ENCODE measurements at regions of chr5 and their contacts with region 1.

Region 1: DNA sequence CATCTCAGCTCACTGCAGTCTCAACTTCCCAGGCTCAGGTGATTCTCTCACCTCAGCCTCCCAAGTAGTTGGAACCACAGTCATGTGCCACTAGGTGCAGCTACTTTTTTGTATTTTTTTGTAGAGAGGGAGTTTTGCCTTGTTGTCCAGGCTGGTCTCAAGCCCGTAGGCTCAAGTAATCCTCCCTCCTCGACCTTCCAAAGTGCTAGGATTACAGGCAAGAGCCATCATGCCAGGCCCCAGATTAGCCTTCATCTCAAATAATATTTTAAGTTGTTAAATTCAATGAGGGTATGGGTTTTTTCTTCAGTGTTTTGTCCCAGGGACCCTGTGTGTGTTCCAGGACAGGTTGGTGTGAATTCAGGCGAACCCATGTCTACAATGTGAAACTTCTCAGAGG is 12.5 kb upstream of the RFESD start:
- DNase-seq: no peak
- H3K4me3 ChIP-seq: no peak overlapping the region
- H3K27ac ChIP-seq: no peak overlapping the region
- H3K4me1 ChIP-seq: no peaks in the 10 kb centered on the region
- H3K27me3 ChIP-seq: no peaks in the 10 kb centered on the region
- CTCF ChIP-seq: no peak
- EP300 ChIP-seq: no peak
- POLR2A ChIP-seq: no peak
- RAD21 ChIP-seq: no peak

Region 2: DNA sequence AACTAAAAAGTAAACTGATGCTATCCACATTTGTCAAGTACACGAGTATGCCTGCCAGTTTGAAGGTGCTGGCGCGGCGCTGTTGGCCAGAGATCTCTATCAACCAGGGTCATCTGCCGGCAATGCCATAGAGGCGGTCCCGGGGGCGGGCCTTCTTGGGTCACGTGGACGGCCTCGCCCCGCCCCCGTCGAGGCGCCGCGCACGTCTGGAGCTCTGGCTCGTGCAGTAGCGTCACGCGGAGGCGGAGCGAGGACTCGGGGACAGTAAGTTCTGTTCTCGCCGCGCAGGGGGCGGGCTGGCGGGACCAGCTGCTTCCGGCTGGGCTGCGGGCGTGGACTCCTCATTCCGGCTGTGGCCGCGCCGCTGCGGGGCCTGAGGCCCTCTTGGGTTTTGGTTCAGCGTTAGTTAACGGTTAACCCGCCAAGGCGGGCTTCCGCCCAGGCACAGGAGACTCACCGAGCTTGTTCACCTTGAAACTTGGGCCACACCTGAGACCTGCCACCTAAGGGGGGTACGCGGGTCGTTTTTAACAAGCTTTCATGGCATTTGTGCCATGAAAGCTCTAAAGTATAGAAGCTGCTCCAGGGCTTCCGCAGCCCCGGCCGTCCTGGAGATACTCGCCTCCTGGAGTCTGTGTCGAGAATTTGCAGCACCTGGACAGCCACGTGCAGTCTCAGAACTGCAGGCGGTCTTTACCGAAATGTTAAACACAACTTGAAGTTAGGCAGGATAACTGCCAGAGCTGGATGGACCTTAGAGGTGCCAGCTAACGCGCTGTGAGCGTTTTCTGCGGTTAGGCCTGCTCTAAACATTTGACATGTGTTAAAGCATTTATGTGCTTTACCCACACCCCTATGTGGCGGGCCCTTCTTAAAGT is 12.7 kb after region 1 on chr5 and contains the start of gene RFESD:
- CTCF ChIA-PET with region 1: interaction called, 13 read pairs
- POLR2A ChIA-PET with region 1: no interaction called
- DNase-seq: peak; percentile 92 to 97
- H3K4me3 ChIP-seq: peak within 1 kb of the TSS; percentile 47 to 63 (median 56)
- H3K27ac ChIP-seq: peak within 1 kb of the TSS; percentile 20; the same call in 1 of the 2 replicates
- H3K4me1 ChIP-seq: peaks cover 0 to 6% (median 3%) of the 10 kb centered on the region in 4 experiments; a peak in 2 of 7 replicates
- H3K27me3 ChIP-seq: no peaks in the 10 kb centered on the region
- CTCF ChIP-seq: peak in 2 of 3 experiments; percentile 7 to 9; a peak in 2 of 4 replicates
- EP300 ChIP-seq: peak in 1 of 2 experiments; percentile 48; a peak in 1 of 3 replicates
- POLR2A ChIP-seq: peak in 1 of 2 experiments; percentile 81; a peak in 2 of 3 replicates
- RAD21 ChIP-seq: peak in 1 of 2 experiments; percentile 26; a peak in 1 of 4 replicates
- total RNA-seq, gene RFESD: 2.0 and 4.3 TPM in 2 replicates